ENCODE measurements at regions of chr1 and their contacts with region 1.

Region 1: DNA sequence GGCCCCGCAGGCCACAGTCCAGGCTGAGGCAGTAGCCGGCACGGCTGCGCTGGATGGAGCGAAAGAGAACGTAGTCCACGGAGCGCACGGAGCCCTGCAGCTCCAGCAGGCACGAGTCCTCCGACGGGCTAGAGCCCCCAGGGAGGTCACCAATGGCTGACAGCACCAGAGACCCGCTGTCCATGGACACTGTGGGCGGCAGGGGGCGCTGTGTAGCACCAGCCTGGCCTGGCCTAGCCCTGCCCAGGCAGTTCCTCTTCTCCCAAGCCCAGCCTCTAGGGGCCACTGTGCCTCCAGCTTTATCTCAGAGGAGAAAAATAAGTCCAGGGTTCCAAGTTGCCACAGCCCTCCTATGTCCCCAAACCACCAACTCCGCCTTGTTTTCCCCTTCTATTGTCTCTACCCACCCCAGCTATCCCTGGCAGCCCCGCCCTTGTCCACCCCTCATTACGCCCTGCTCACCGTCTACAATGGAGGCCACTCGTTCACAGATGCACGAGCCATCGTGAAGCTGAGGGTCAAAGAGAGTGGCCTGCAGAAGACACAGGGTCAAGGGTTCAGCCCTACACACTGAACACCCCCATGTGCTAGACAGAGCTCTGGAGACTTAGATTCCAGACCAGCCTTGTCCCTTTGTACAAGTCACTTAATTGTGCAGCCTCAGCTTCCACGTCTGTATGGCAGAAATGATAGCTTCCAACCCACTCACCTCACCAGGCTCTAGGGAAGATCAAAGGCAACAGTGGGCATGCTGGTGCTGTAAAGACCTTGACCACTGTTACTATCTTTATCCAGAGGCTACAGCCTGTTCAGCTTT is 4.4 kb downstream of the ENTREP3 start:
- DNase-seq: no peak
- H3K4me3 ChIP-seq: no peak overlapping the region
- CTCF ChIP-seq: peak; percentile 100

Region 2: GRCh38 chr1:154970631-154971340 is 280.1 kb before region 1 on chr1 and contains the start of gene SHC1:
- CTCF ChIA-PET with region 1: no interaction called
- POLR2A ChIA-PET with region 1: no interaction called
- DNase-seq: peak; percentile 63
- H3K4me3 ChIP-seq: peak within 1 kb of the TSS; percentile 82
- CTCF ChIP-seq: no peak

Region 3: DNA sequence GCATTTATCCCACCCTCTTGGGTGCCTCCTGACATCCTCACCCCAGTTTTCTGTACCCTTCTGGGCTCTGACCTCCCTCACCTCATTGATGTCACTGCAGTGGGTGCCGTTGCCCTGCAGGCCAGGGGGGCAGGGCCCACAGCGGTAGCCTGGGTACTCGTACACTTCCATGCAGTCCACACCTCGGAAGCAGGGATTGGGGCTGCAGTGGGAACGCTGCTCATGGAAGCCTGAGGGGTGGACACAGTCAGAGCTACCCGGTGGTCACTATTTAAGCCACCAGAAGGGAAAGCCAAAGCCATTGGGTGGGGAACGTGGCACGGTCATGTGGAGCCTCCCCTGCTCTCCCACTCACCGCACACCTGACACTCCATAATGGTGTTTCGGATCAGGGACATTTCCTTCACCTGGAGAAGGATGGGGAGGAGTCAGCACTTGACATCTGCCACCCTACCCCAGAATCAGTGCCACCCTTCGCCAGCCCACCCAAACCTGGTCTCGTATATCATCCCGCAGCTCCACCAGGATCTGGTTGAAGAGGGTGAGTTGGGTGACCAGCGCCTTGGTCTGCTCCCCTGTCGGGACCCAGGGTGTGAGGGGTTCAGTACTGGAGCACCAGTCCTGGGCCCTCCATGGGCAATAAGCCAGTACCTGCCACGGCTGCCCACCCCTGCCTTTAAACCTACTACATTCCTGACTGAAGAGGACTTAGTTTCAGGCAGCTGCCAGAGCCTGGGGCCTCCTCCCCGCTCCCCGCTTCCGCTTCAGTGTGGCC is 47.9 kb before region 1 on chr1:
- CTCF ChIA-PET with region 1: interaction called, 62 read pairs
- POLR2A ChIA-PET with region 1: interaction called, 4 read pairs
- DNase-seq: no peak
- H3K4me3 ChIP-seq: no peak overlapping the region
- CTCF ChIP-seq: no peak

Region 4: GRCh38 chr1:155227261-155228095 is 23.4 kb before region 1 on chr1:
- CTCF ChIA-PET with region 1: interaction called, 37 read pairs
- POLR2A ChIA-PET with region 1: interaction called, 4 read pairs
- DNase-seq: peak; percentile 94
- H3K4me3 ChIP-seq: peak overlapping the region; percentile 77
- CTCF ChIP-seq: no peak

Region 5: DNA sequence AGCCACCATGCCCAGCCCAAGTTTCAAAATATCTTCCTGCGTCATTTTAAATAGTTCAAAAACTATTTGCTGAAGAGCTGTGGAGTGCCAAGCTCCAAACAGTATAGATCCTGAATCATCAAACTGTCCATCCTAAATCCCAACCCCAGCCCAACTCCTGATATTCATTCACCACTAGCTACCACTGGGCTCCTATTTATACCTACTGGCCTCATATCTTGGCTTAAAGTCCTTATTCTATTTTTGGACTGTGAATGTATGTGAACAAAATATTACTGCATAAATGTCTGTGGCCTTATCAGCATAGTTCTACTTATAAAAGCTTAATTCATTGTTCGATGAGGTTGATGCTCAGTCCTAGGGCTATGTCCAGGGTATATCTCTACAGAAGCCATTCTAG is 16.5 kb after region 1 on chr1:
- CTCF ChIA-PET with region 1: interaction called, 112 read pairs
- POLR2A ChIA-PET with region 1: interaction called, 13 read pairs
- DNase-seq: no peak
- H3K4me3 ChIP-seq: no peak overlapping the region
- CTCF ChIP-seq: no peak

Region 6: DNA sequence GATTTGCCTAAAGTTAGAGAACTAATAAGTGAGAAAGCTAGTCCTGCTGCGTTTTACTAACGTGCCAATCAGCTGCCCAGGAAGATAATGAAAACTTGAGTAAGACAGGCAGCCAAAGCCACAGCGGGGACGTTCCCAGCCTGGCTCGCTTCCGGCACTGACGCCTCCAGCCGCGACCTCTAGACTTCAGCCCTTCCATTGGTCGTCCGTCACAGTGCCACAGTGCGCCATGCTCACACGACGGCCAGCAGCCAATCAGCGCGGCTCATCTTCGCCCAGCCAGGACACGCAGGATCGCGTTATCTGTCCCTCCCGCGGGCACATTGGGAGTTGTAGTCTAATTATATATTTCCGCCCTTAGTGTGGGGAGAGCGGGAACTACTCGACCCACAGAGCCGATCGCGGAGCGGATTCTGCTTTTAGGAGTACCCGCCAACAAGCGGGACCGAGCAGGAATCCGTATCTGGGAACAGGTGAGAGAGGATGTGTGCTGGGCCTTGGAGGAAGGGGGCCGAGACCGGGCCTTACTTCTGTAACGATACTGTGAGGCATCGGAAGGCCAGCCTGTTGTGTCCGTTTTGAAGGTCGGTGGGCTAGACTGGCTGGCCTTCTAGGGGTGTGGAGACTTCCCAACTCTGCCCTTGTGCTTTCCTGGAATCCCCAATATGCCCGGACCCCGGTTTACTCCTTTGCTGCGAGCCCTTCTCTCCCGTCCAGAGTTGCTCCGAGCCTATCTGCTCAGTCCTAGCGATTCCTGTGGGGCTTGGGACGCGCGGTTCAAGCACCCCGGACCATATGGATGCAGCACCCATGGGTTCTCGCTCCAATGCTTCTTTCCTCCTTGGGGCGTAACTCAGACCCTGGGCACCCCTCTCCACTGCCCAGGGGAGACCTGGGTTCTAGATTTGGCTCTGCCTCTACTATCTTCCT is 57.9 kb after region 1 on chr1 and contains the start of gene FDPS:
- CTCF ChIA-PET with region 1: interaction called, 101 read pairs
- POLR2A ChIA-PET with region 1: interaction called, 3 read pairs
- DNase-seq: peak; percentile 94
- H3K4me3 ChIP-seq: peak within 1 kb of the TSS; percentile 84
- CTCF ChIP-seq: no peak

Region 7: DNA sequence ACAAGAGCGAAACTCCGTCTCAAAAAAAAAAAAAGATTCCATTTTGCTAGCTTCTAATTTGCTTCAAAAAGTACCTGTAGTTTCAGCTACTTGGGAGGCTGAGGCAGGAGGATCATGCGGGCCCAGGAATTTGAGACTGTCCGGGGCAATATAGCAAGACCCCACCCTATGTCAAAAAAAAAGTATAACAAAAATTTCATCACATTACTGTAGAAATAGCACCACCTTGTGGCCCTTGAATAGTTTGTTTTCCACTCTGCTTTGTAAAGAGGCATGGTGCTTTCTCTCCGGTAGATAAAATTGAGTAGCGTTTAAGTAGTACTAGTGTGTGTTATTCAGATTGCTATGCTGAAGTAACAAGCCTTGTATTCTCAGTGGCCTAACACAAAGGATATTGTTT is 340.9 kb after region 1 on chr1:
- CTCF ChIA-PET with region 1: interaction called, 49 read pairs
- POLR2A ChIA-PET with region 1: no interaction called
- DNase-seq: no peak
- H3K4me3 ChIP-seq: no peak overlapping the region
- CTCF ChIP-seq: peak; percentile 31